GM18951 (cell line): ENCODE measurements at regions of chr21 and their contacts with region 1.

Region 1: GRCh38 chr21:42593007-42593806 is 60.2 kb upstream of the PDE9A start:
- POLR2A ChIP-seq: no peak

Region 2: DNA sequence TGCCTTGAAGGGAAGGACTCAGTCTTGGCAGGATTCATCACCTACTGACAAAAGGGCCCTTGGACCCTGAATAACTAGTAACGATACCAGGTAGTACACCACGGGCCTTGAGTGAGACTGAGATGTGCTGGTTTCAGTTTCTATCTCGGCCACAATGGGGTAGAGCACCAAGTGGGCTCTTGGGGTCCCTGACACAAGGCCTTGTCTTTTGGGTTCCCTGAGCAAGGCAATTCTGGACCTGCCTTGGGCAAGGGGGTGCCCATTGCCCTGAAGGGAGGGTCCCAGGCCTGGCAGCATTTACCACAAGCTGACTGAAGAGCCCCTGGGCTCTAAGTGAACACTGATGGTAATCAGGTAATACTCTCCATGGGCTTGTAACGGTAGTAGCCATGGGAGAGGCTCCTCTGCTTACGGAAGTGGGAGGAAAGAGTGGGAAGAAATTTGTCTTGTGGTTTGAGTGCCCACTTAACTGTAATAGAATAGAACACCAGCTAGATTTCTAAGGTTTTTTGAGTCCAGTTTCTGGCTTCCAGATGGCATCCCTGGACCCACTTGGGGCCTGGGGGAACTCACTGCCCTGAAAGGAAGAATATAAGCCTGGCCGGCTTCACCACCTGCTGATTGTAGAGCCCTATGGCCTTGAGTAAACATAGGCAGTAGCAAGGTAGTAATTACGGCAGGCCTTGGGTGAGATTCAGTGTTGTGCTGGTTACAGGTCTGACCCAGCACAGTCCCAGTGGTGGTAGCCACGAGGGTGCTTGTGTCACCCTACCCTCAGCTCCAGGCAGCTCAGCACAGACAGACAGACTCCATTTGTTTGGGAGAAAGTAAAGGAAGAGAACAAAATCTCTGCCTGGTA is 227.6 kb after region 1 on chr21:
- in situ Hi-C with region 1: loop called (anchors 10 kb)
- POLR2A ChIP-seq: no peak